GM12878 (cell line): ENCODE measurements at regions of chr20 and their contacts with region 1.

Region 1: GRCh38 chr20:2742934-2743559 is 50.5 kb downstream of the EBF4 start:
- DNase-seq: no peak
- ATAC-seq: peak; percentile 96
- H3K4me3 ChIP-seq: no peak overlapping the region
- H3K27ac ChIP-seq: no peak overlapping the region
- H3K4me1 ChIP-seq: no peaks in the 10 kb centered on the region
- H3K27me3 ChIP-seq: no peaks in the 10 kb centered on the region; a peak in 2 of 4 replicates
- CTCF ChIP-seq: peak; percentile 84 to 95 (median 90)
- EP300 ChIP-seq: no peak
- POLR2A ChIP-seq: no peak
- RAD21 ChIP-seq: peak; percentile 62

Region 2: GRCh38 chr20:2599288-2600006 is 143.6 kb before region 1 on chr20:
- CTCF ChIA-PET with region 1: no interaction called
- POLR2A ChIA-PET with region 1: no interaction called
- RAD21 ChIA-PET with region 1: no interaction called
- SMC1A ChIA-PET with region 1: no interaction called
- in situ Hi-C with region 1: no loop called
- intact Hi-C with region 1: no loop called
- DNase-seq: no peak
- ATAC-seq: no peak
- H3K4me3 ChIP-seq: no peak overlapping the region
- H3K27ac ChIP-seq: no peak overlapping the region
- H3K4me1 ChIP-seq: no peaks in the 10 kb centered on the region
- H3K27me3 ChIP-seq: no peaks in the 10 kb centered on the region
- CTCF ChIP-seq: no peak
- EP300 ChIP-seq: no peak
- POLR2A ChIP-seq: no peak
- RAD21 ChIP-seq: no peak

Region 3: GRCh38 chr20:2688041-2688591 is 54.9 kb before region 1 on chr20:
- CTCF ChIA-PET with region 1: interaction called, 4 read pairs
- POLR2A ChIA-PET with region 1: no interaction called
- RAD21 ChIA-PET with region 1: interaction called, 3 read pairs
- SMC1A ChIA-PET with region 1: interaction called, 3 read pairs
- in situ Hi-C with region 1: no loop called
- intact Hi-C with region 1: loop called (anchors 10 kb)
- DNase-seq: no peak
- ATAC-seq: peak; percentile 75
- H3K4me3 ChIP-seq: no peak overlapping the region
- H3K27ac ChIP-seq: no peak overlapping the region
- H3K4me1 ChIP-seq: no peaks in the 10 kb centered on the region
- H3K27me3 ChIP-seq: peaks cover 7 to 10% of the 10 kb centered on the region in 2 experiments
- CTCF ChIP-seq: peak; percentile 57 to 62 (median 57)
- EP300 ChIP-seq: no peak
- POLR2A ChIP-seq: no peak
- RAD21 ChIP-seq: peak; percentile 69

Region 4: GRCh38 chr20:2729251-2729713 is 13.8 kb before region 1 on chr20:
- CTCF ChIA-PET with region 1: interaction called, 19 read pairs
- POLR2A ChIA-PET with region 1: no interaction called
- RAD21 ChIA-PET with region 1: no interaction called
- SMC1A ChIA-PET with region 1: interaction called, 3 read pairs
- in situ Hi-C with region 1: no loop called
- intact Hi-C with region 1: no loop called
- DNase-seq: no peak
- ATAC-seq: no peak
- H3K4me3 ChIP-seq: no peak overlapping the region
- H3K27ac ChIP-seq: no peak overlapping the region
- H3K4me1 ChIP-seq: peaks cover 5% of the 10 kb centered on the region; the same call in 1 of the 2 replicates
- H3K27me3 ChIP-seq: peaks cover 2 to 3% of the 10 kb centered on the region in 2 experiments; a peak in 3 of 4 replicates
- CTCF ChIP-seq: no peak
- EP300 ChIP-seq: no peak
- POLR2A ChIP-seq: no peak
- RAD21 ChIP-seq: no peak

Region 5: DNA sequence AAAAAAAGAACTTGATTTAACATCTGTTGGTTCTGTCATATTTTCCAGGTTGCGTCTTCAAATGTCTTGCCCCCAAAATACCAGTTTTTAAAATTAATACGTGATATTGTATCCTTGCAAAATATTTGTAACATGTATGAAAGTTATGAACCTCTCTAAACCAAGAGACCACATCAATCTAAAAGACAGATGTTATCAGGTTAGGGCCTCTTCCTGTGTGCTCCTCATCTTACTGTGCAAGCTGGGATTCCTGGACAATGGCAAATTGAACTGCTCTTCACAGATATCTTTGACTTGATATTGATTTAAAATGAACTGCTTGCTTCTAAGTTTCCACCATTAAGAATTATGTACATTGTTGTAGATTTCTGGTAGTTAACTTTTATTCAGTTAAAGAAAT is 82.7 kb after region 1 on chr20:
- CTCF ChIA-PET with region 1: no interaction called
- POLR2A ChIA-PET with region 1: no interaction called
- RAD21 ChIA-PET with region 1: no interaction called
- SMC1A ChIA-PET with region 1: no interaction called
- in situ Hi-C with region 1: no loop called
- intact Hi-C with region 1: no loop called
- DNase-seq: no peak
- ATAC-seq: no peak
- H3K4me3 ChIP-seq: no peak overlapping the region
- H3K27ac ChIP-seq: no peak overlapping the region
- H3K4me1 ChIP-seq: no peaks in the 10 kb centered on the region; the same call in 1 of the 2 replicates
- H3K27me3 ChIP-seq: no peaks in the 10 kb centered on the region
- CTCF ChIP-seq: no peak
- EP300 ChIP-seq: no peak
- POLR2A ChIP-seq: no peak
- RAD21 ChIP-seq: no peak

Region 6: GRCh38 chr20:2849529-2849928 is 106.5 kb after region 1 on chr20:
- CTCF ChIA-PET with region 1: no interaction called
- POLR2A ChIA-PET with region 1: no interaction called
- RAD21 ChIA-PET with region 1: no interaction called
- SMC1A ChIA-PET with region 1: no interaction called
- in situ Hi-C with region 1: no loop called
- intact Hi-C with region 1: loop called (anchors 5 kb)
- DNase-seq: no peak
- ATAC-seq: no peak
- H3K4me3 ChIP-seq: no peak overlapping the region
- H3K27ac ChIP-seq: no peak overlapping the region
- H3K4me1 ChIP-seq: peaks cover 5% of the 10 kb centered on the region; the same call in 1 of the 2 replicates
- H3K27me3 ChIP-seq: no peaks in the 10 kb centered on the region
- CTCF ChIP-seq: no peak
- EP300 ChIP-seq: no peak
- POLR2A ChIP-seq: no peak
- RAD21 ChIP-seq: no peak